Heart right ventricle (tissue), 16 donors: ENCODE measurements at regions of chr3 and their contacts with region 1.

Region 1: GRCh38 chr3:82133070-82133606 is 371.7 kb upstream of the GBE1 start:
- DNase-seq: peak; percentile 44 to 53
- ATAC-seq: peak in 7 of 8 donors; percentile 63 to 89 (median 78)
- H3K4me3 ChIP-seq: no peak overlapping the region
- H3K27ac ChIP-seq: no peak overlapping the region
- H3K4me1 ChIP-seq: no peaks in the 10 kb centered on the region
- H3K27me3 ChIP-seq: no peaks in the 10 kb centered on the region
- CTCF ChIP-seq: peak; percentile 73 to 93 (median 87)

Region 2: GRCh38 chr3:81419228-81419627 is 713.9 kb before region 1 on chr3:
- intact Hi-C with region 1: loop called in 2 of 10 experiments (anchors 10 kb)
- DNase-seq: no peak
- ATAC-seq: no peak
- H3K4me3 ChIP-seq: no peak overlapping the region
- H3K27ac ChIP-seq: no peak overlapping the region
- H3K4me1 ChIP-seq: no peaks in the 10 kb centered on the region
- H3K27me3 ChIP-seq: no peaks in the 10 kb centered on the region
- CTCF ChIP-seq: peak; percentile 21 to 64 (median 54)

Region 3: GRCh38 chr3:81666493-81667121 is 466.5 kb before region 1 on chr3:
- intact Hi-C with region 1: loop called in 9 of 10 experiments (anchors 2 to 10 kb)
- DNase-seq: no peak
- ATAC-seq: peak in 1 of 8 donors; percentile 53
- H3K4me3 ChIP-seq: no peak overlapping the region
- H3K27ac ChIP-seq: no peak overlapping the region
- H3K4me1 ChIP-seq: peaks cover 0 to 30% (median 13%) of the 10 kb centered on the region in 9 donors
- H3K27me3 ChIP-seq: no peaks in the 10 kb centered on the region
- CTCF ChIP-seq: peak; percentile 38 to 86 (median 81)

Region 4: DNA sequence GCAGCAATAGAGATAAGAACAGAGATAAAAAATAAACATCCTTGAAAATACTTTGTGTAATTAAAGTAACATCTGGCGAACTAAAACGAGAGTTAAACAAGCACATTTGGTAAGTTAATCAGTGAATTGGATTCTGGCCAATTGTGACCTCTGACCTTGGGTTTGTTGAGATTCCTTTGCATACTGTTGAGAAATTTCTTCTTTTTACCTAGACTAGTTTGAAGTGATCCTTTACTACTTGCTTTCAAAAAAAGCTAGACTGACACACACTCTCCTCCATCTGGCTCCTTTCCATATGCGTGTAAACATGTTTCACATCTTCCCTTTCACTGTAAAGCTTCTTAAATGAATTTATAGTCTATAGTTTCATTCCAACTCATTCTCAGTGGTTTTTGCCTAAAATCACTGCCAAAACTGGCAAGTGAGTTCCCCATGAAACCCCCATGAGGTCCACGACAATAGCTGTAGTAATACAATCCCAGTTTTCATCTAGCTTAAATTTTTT is 354.4 kb before region 1 on chr3:
- intact Hi-C with region 1: loop called in 1 of 10 experiments (anchors 10 kb)
- DNase-seq: peak in 1 of 2 donors; percentile 77
- ATAC-seq: peak in 6 of 8 donors; percentile 51 to 79 (median 60)
- H3K4me3 ChIP-seq: no peak overlapping the region
- H3K27ac ChIP-seq: peak overlapping the region in 5 of 10 donors; percentile 20 to 62 (median 44)
- H3K4me1 ChIP-seq: peaks cover 2 to 31% (median 17%) of the 10 kb centered on the region in 9 donors
- H3K27me3 ChIP-seq: no peaks in the 10 kb centered on the region
- CTCF ChIP-seq: no peak

Region 5: GRCh38 chr3:81910244-81910852 is 222.8 kb before region 1 on chr3:
- intact Hi-C with region 1: loop called in 4 of 10 experiments (anchors 2 to 10 kb)
- DNase-seq: peak in 1 of 2 donors; percentile 16
- ATAC-seq: peak in 1 of 8 donors; percentile 39
- H3K4me3 ChIP-seq: no peak overlapping the region
- H3K27ac ChIP-seq: no peak overlapping the region
- H3K4me1 ChIP-seq: peaks cover 0 to 4% (median 0%) of the 10 kb centered on the region in 9 donors
- H3K27me3 ChIP-seq: no peaks in the 10 kb centered on the region
- CTCF ChIP-seq: peak; percentile 72 to 84 (median 77)

Region 6: DNA sequence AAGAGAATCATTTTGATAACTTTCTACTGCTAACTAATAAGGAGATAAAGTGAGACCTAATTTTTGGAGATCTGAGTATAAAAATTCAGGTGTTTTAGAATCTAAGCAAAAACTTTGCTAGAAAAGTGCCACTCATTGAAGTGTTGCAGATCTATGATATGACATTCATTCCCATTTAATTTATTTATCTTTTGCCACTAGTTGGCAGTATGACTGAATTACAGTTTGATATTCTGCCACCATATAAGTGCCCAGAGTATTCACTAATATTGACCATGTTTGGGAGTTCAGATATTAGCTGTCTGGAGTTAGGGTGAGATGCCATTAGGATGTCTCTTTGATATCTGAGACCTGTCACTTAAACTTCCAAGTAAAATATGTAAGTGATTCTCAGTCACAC is 120.4 kb before region 1 on chr3:
- intact Hi-C with region 1: loop called in 1 of 10 experiments (anchors 10 kb)
- DNase-seq: no peak
- ATAC-seq: no peak
- H3K4me3 ChIP-seq: no peak overlapping the region
- H3K27ac ChIP-seq: no peak overlapping the region
- H3K4me1 ChIP-seq: no peaks in the 10 kb centered on the region
- H3K27me3 ChIP-seq: no peaks in the 10 kb centered on the region
- CTCF ChIP-seq: peak in 2 of 9 donors; percentile 19 to 31